GM23248 (cell line): ENCODE measurements at regions of chr11 and their contacts with region 1.

Region 1: GRCh38 chr11:112588252-112588694 is 327.6 kb upstream of the PLET1 start:
- DNase-seq: peak; percentile 89
- H3K4me3 ChIP-seq: no peak overlapping the region
- H3K27ac ChIP-seq: no peak overlapping the region
- H3K4me1 ChIP-seq: no peaks in the 10 kb centered on the region
- H3K27me3 ChIP-seq: peaks cover 5% of the 10 kb centered on the region; the same call in 1 of the 2 replicates

Region 2: DNA sequence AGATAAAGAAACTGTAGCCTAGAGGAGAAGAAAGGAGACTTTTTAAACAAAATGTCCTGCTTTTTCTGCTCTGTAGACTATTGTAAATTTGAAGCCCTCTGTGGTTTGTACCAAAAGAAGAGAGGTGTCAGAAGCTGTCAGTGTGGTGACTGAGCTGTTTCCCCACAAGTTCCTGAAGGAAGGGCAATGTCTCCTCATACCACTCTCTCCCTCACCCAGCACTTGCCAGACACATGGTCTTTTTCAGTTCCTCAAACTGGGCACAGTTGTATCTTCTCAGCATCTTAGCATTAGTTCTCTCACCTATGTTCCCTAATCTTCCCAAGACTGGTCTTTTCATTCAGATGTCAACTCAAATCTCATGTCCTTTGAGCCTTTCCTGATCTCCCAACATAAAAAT is 408.7 kb before region 1 on chr11:
- in situ Hi-C with region 1: no loop called
- DNase-seq: no peak
- H3K4me3 ChIP-seq: no peak overlapping the region
- H3K27ac ChIP-seq: no peak overlapping the region
- H3K4me1 ChIP-seq: peaks cover 5% of the 10 kb centered on the region; the same call in 1 of the 2 replicates
- H3K27me3 ChIP-seq: no peaks in the 10 kb centered on the region

Region 3: GRCh38 chr11:112280268-112281126 is 307.8 kb before region 1 on chr11:
- in situ Hi-C with region 1: no loop called
- DNase-seq: peak; percentile 92
- H3K4me3 ChIP-seq: peak overlapping the region; percentile 76
- H3K27ac ChIP-seq: no peak overlapping the region
- H3K4me1 ChIP-seq: peaks cover 9% of the 10 kb centered on the region
- H3K27me3 ChIP-seq: no peaks in the 10 kb centered on the region

Region 4: DNA sequence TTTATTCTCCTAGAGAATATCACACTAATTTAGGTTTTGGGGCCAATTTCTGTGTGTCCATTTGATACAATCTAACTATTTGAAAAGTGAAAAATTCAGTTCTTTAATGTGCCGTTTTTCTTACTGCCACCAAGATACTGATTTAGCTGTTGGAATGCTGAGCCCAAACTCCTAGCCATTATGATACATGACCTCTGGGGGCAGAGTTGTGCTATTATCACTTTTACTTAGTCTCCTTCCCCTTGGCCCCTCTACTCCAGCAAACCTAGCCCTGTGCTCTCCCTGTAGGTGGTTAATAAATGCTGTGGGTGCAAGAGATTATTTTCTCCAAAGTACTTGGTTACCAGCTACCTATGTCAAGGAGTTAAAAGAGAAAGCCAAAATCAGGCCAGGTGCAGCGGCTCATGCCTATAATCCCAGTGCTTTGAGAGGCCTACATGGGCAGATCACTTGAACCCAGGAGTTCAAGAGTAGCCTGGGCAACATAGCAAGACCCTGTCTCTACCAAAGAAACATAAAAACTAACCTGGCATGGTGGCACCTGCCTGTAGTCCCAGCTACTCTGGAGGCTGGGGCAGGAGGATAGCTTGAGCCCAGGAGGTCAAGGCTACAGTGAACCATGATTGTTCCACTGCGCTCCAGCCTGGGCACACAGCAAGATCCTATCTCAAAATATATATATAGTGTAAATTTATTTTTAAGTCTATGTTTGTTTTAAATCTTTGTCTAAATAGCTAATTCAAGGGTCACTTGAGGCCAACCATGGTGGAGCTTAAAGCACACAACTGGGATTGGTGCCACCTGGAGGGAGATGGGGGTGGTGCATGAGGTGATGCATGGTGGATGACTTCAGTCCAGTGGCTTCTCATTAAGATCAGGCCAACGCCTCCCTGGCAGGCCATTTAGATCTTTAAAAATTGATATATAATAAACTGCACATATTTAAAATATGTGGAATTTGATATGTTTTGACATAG is 134.4 kb before region 1 on chr11:
- in situ Hi-C with region 1: no loop called
- DNase-seq: peak; percentile 48
- H3K4me3 ChIP-seq: no peak overlapping the region
- H3K27ac ChIP-seq: no peak overlapping the region
- H3K4me1 ChIP-seq: no peaks in the 10 kb centered on the region
- H3K27me3 ChIP-seq: 0 out of 2 replicates have a peak, but pooled peaks cover 2% of the 10 kb centered on the region

Region 5: GRCh38 chr11:112644410-112645131 is 56.3 kb after region 1 on chr11:
- in situ Hi-C with region 1: no loop called
- DNase-seq: no peak
- H3K4me3 ChIP-seq: no peak overlapping the region
- H3K27ac ChIP-seq: no peak overlapping the region
- H3K4me1 ChIP-seq: no peaks in the 10 kb centered on the region
- H3K27me3 ChIP-seq: no peaks in the 10 kb centered on the region

Region 6: GRCh38 chr11:113113801-113114706 is 525.8 kb after region 1 on chr11:
- in situ Hi-C with region 1: loop called (anchors 25 kb)
- DNase-seq: peak; percentile 75
- H3K4me3 ChIP-seq: no peak overlapping the region
- H3K27ac ChIP-seq: no peak overlapping the region
- H3K4me1 ChIP-seq: no peaks in the 10 kb centered on the region
- H3K27me3 ChIP-seq: no peaks in the 10 kb centered on the region